PC-9 (cell line): ENCODE measurements at regions of chr1 and their contacts with region 1.

Region 1: DNA sequence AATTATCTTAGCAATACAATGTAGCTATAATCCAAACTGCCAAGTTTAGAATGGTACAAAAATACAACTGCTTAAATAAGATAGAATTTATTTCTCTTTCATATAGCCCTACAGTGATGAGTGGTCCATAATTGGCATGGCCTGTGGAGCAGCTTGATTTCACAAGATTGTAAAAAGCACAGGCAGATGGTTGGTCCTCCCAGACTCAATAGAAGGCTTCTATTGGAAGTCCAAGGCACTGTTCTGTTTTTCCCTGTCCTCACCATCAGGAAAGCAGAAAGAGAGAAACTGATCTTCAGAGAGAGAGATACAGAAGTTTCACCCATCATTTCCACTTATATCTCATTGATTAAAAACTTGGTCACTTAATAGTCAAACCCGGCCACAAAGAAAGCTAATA is 1.8 kb upstream of the OR6P1 start:
- DNase-seq: no peak
- H3K4me3 ChIP-seq: no peak overlapping the region
- H3K27ac ChIP-seq: no peak overlapping the region
- H3K4me1 ChIP-seq: no peaks in the 10 kb centered on the region
- H3K27me3 ChIP-seq: 0 out of 2 replicates have a peak, but pooled peaks cover 2% of the 10 kb centered on the region
- CTCF ChIP-seq: no peak

Region 2: GRCh38 chr1:158527190-158527815 is 44.9 kb before region 1 on chr1:
- CTCF ChIA-PET with region 1: interaction called, 13 read pairs
- POLR2A ChIA-PET with region 1: no interaction called
- intact Hi-C with region 1: no loop called
- DNase-seq: peak in 1 of 2 experiments; percentile 42
- H3K4me3 ChIP-seq: no peak overlapping the region
- H3K27ac ChIP-seq: no peak overlapping the region
- H3K4me1 ChIP-seq: no peaks in the 10 kb centered on the region
- H3K27me3 ChIP-seq: 0 out of 2 replicates have a peak, but pooled peaks cover 3% of the 10 kb centered on the region
- CTCF ChIP-seq: peak; percentile 72